ENCODE measurements at regions of chr5 and their contacts with region 1.

Region 1: DNA sequence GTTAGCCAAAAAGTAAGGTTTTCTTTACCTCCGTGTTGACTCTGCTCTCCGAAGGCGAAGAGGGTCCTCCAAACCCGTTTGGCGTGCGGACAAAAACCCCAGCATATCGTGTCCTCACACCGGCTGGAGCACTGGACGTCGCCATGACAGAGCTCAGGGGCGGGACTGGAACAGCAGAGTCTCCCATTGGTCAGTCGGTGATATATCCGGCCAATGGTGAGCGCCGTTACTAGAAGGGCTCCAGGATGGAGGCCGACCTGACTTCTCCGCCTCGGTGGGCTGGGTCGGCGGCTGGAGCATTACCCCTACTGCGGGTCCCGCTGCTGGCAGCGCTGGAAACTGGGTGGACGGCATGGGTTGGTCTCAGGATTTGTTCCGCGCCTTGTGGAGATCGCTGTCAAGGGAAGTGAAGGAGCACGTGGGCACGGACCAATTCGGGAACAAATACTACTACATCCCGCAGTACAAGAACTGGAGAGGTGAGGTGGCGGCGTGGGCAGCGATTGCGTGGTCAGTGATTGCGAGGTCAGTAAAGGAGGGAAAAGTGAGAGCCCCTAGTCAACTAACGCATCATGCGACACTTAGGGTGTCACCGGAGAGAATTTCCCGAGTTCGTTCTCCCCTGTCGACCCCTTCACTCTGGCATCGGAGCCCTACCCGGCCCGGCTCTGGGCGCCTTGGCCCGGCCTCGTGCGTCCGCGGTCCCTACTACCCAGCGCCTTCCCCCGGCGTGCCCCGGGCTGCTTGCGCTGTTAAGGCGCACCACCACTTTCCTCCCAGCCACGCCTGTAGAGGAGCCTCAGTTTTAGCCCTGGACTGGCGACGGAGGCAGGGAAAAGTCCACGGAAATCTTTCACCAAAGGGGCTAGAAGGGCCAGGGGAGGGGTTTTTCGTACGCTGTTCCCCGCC is at the starts of genes ERCC8 and NDUFAF2:
- DNase-seq: peak; percentile 96
- H3K4me3 Mint-ChIP-seq: no peak within 1 kb of the TSS
- H3K27ac Mint-ChIP-seq: no peak within 1 kb of the TSS
- H3K4me1 Mint-ChIP-seq: peaks cover 16% of the 10 kb centered on the region
- H3K27me3 Mint-ChIP-seq: no peaks in the 10 kb centered on the region
- total RNA-seq, gene ERCC8: 10.7 and 10.8 TPM in 2 replicates
- total RNA-seq, gene NDUFAF2: 38.0 and 39.5 TPM in 2 replicates

Region 2: GRCh38 chr5:60699530-60700382 is 245.4 kb before region 1 on chr5 and contains the start of gene DEPDC1B:
- intact Hi-C with region 1: loop called (anchors 2 kb)
- DNase-seq: peak; percentile 97
- H3K4me3 Mint-ChIP-seq: peak within 1 kb of the TSS; percentile 91
- H3K27ac Mint-ChIP-seq: peak within 1 kb of the TSS; percentile 93
- H3K4me1 Mint-ChIP-seq: peaks cover 28% of the 10 kb centered on the region
- H3K27me3 Mint-ChIP-seq: peaks cover 23% of the 10 kb centered on the region
- total RNA-seq, gene DEPDC1B: 19.8 and 20.5 TPM in 2 replicates

Region 3: GRCh38 chr5:60843936-60844905 is 100.9 kb before region 1 on chr5 and contains the start of gene ELOVL7:
- intact Hi-C with region 1: loop called (anchors 5 kb)
- DNase-seq: peak; percentile 85
- H3K4me3 Mint-ChIP-seq: peak within 1 kb of the TSS; percentile 84
- H3K27ac Mint-ChIP-seq: no peak within 1 kb of the TSS
- H3K4me1 Mint-ChIP-seq: peaks cover 11% of the 10 kb centered on the region
- H3K27me3 Mint-ChIP-seq: peaks cover 54% of the 10 kb centered on the region
- total RNA-seq, gene ELOVL7: 0.56 and 1.1 TPM in 2 replicates

Region 4: GRCh38 chr5:60929024-60929423 is 16.1 kb before region 1 on chr5:
- intact Hi-C with region 1: no loop called
- DNase-seq: peak; percentile 43
- H3K4me3 Mint-ChIP-seq: no peak overlapping the region
- H3K27ac Mint-ChIP-seq: no peak overlapping the region
- H3K4me1 Mint-ChIP-seq: peaks cover 2% of the 10 kb centered on the region
- H3K27me3 Mint-ChIP-seq: no peaks in the 10 kb centered on the region

Region 5: DNA sequence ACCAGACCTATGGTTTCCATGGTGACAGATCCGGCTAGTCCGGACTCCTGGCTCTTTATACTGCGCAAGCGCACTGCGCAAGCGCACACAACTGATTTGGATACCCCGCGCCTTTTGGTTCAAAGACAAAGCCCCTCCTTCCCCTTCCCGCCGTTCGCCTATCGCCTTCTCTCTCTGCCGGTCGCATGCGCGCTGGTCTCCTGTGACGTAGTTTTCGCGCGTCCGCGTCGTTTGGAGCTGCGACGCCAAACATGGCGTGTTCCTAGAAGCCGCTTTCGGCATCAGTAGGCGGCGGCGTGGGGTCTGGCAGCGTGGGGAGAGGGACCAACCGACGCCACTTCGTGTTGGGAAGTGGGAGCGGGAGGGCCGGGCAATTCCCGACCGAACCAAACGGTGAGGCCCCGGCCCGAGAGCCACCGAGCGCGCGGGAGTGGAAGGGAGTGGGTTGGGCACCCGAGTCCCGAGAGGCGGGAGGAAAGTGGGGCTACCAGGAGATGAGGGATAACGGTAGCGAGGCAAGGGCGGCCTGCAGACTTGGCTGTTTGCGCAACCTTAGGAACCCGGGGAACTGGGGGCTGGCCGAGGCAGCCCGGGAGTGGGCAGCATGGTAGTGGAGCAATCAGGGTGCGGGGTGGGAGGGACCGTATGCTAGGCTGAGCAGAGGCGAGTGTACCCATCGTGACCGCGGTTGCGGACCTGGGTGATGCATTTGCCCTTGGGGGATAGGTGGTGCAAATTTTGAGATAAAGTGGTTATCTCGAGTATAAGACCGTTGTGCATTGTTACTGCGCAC is 1467.6 kb after region 1 on chr5 and contains the start of gene IPO11:
- intact Hi-C with region 1: loop called (anchors 1 kb)
- DNase-seq: peak; percentile 100
- H3K4me3 Mint-ChIP-seq: peak within 1 kb of the TSS; percentile 93
- H3K27ac Mint-ChIP-seq: peak within 1 kb of the TSS; percentile 95
- H3K4me1 Mint-ChIP-seq: peaks cover 20% of the 10 kb centered on the region
- H3K27me3 Mint-ChIP-seq: peaks cover 9% of the 10 kb centered on the region
- total RNA-seq, gene IPO11: 56.7 and 60.9 TPM in 2 replicates

Measured in activated CD4-positive, alpha-beta T cell treated with anti-CD3 and anti-CD28 coated beads, Interleukin-2, amount 10 ng/mL, durations not matched to agents 24 days and 14 days (primary cell).